ENCODE measurements at regions of chr12 and their contacts with region 1.

Region 1: GRCh38 chr12:126784328-126784921 is 1482.5 kb upstream of the TMEM132C start:
- DNase-seq: peak in 1 of 5 donors; percentile 10
- H3K4me3 ChIP-seq: no peak overlapping the region
- H3K4me3 Mint-ChIP-seq: no peak overlapping the region
- H3K27ac ChIP-seq: no peak overlapping the region
- H3K27ac Mint-ChIP-seq: peak overlapping the region in 1 of 8 donors; percentile 1
- H3K4me1 ChIP-seq: no peaks in the 10 kb centered on the region
- H3K4me1 Mint-ChIP-seq: peaks cover 8 to 28% (median 24%) of the 10 kb centered on the region in 3 donors
- H3K27me3 ChIP-seq: no peaks in the 10 kb centered on the region
- H3K27me3 Mint-ChIP-seq: no peaks in the 10 kb centered on the region

Region 2: DNA sequence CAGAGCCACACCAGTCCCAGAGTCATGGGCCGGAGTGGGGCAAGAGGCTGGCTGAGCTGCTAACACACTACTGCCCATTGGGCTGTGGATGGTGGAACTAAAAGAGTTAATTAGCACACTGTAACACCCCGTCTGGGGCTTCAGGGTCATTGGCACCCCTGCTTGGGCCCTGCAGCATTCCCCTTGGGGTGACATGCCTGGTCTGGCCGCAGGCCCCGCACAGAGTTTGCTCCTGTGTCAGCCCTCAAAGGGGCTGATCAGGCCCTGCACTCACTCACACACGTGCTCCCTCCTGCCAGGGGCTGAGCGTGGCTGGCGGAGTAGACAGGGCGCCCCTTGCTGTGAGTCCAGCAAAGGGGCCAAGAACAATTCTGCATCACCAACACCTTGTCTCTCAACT is 17.1 kb before region 1 on chr12:
- CTCF ChIA-PET with region 1: interaction called, 12 read pairs
- POLR2A ChIA-PET with region 1: no interaction called
- DNase-seq: no peak
- H3K4me3 ChIP-seq: no peak overlapping the region
- H3K4me3 Mint-ChIP-seq: peak overlapping the region in 3 of 7 donors; percentile 32 to 61 (median 41)
- H3K27ac ChIP-seq: no peak overlapping the region
- H3K27ac Mint-ChIP-seq: peak overlapping the region in 3 of 8 donors; percentile 14 to 94 (median 51)
- H3K4me1 ChIP-seq: peaks cover 53% of the 10 kb centered on the region
- H3K4me1 Mint-ChIP-seq: peaks cover 61 to 81% (median 73%) of the 10 kb centered on the region in 3 donors
- H3K27me3 ChIP-seq: no peaks in the 10 kb centered on the region
- H3K27me3 Mint-ChIP-seq: peaks cover 0 to 1% of the 10 kb centered on the region in 2 donors